ENCODE measurements at regions of chr9 and their contacts with region 1.

Region 1: DNA sequence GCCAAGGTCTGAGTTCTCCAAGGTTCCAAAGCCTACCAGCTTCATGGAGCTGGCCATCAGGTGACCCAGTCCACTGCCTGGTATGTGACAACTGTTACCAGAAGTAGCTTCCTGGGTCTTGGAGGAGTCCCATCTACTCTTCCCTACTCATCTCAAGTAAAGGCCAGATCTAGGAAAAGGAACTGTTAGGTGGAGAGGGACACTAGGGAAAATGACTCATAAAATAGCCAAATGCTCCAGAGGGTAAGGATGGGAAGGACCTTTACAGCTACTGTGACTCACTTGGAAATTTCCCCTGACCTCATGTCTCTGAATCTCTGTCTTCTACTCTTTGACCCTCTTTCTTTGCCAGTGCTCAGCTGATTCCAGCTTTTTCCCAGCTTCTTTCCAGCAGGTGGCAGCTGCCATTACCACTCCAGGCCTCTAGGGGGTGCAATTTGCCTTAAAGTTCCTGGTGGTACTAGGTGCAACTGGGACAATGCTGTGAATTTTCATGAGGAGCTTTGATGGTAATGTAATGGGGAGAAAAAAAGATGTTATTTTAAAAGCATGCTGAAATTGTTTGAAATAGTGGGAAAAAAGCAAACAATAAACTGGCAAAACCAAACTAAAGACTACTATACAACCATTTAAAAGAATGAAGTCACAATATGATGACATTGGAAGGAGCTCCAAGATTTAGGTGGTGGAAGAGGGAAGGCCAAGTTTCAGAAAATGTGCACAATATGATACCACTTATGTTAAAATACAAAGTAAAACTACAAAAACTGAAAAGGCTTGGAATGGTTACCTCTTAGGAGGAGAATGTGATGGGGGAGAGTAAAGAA is 27.1 kb upstream of the MYORG start:
- DNase-seq: peak; percentile 79
- H3K4me3 Mint-ChIP-seq: no peak overlapping the region
- H3K27ac Mint-ChIP-seq: no peak overlapping the region
- H3K4me1 Mint-ChIP-seq: no peaks in the 10 kb centered on the region
- H3K27me3 Mint-ChIP-seq: no peaks in the 10 kb centered on the region

Region 2: GRCh38 chr9:34158362-34158869 is 245.4 kb before region 1 on chr9:
- CTCF ChIA-PET with region 1: no interaction called
- intact Hi-C with region 1: no loop called
- DNase-seq: no peak
- H3K4me3 Mint-ChIP-seq: no peak overlapping the region
- H3K27ac Mint-ChIP-seq: no peak overlapping the region
- H3K4me1 Mint-ChIP-seq: no peaks in the 10 kb centered on the region
- H3K27me3 Mint-ChIP-seq: no peaks in the 10 kb centered on the region

Region 3: GRCh38 chr9:34318163-34318790 is 85.5 kb before region 1 on chr9:
- CTCF ChIA-PET with region 1: no interaction called
- intact Hi-C with region 1: no loop called
- DNase-seq: no peak
- H3K4me3 Mint-ChIP-seq: no peak overlapping the region
- H3K27ac Mint-ChIP-seq: no peak overlapping the region
- H3K4me1 Mint-ChIP-seq: no peaks in the 10 kb centered on the region
- H3K27me3 Mint-ChIP-seq: no peaks in the 10 kb centered on the region

Region 4: GRCh38 chr9:34419716-34420504 is 16.1 kb after region 1 on chr9:
- CTCF ChIA-PET with region 1: interaction called, 19 read pairs
- intact Hi-C with region 1: no loop called
- DNase-seq: no peak
- H3K4me3 Mint-ChIP-seq: no peak overlapping the region
- H3K27ac Mint-ChIP-seq: no peak overlapping the region
- H3K4me1 Mint-ChIP-seq: no peaks in the 10 kb centered on the region
- H3K27me3 Mint-ChIP-seq: no peaks in the 10 kb centered on the region

Region 5: DNA sequence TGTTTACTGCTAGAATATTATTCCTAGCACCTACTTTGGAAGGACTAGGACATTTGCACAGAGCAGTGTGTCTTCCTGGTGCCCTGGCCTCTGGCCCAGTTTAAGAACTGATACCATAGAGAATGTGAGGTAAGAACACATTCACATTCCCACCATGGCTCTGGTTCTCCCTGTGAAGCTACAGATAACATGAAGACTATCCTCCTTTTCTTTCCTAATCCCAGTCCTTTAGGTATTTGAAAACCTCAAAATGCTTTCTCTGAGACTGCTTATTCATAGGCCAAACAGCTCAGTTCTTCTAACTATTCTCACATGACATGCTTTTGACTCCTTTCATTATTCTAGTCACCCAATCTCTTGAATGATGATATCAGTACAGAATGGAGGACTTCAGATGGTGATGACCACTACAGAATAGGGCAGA is 42.7 kb after region 1 on chr9:
- CTCF ChIA-PET with region 1: interaction called, 13 read pairs
- intact Hi-C with region 1: no loop called
- DNase-seq: no peak
- H3K4me3 Mint-ChIP-seq: no peak overlapping the region
- H3K27ac Mint-ChIP-seq: no peak overlapping the region
- H3K4me1 Mint-ChIP-seq: peaks cover under 1% of the 10 kb centered on the region
- H3K27me3 Mint-ChIP-seq: no peaks in the 10 kb centered on the region